SK-MEL-5 (cell line): ENCODE measurements at regions of chr4 and their contacts with region 1.

Region 1: GRCh38 chr4:74308215-74308614 is at the start of gene EPGN:
- DNase-seq: no peak
- total RNA-seq, gene EPGN: not detected in 2 replicates

Region 2: DNA sequence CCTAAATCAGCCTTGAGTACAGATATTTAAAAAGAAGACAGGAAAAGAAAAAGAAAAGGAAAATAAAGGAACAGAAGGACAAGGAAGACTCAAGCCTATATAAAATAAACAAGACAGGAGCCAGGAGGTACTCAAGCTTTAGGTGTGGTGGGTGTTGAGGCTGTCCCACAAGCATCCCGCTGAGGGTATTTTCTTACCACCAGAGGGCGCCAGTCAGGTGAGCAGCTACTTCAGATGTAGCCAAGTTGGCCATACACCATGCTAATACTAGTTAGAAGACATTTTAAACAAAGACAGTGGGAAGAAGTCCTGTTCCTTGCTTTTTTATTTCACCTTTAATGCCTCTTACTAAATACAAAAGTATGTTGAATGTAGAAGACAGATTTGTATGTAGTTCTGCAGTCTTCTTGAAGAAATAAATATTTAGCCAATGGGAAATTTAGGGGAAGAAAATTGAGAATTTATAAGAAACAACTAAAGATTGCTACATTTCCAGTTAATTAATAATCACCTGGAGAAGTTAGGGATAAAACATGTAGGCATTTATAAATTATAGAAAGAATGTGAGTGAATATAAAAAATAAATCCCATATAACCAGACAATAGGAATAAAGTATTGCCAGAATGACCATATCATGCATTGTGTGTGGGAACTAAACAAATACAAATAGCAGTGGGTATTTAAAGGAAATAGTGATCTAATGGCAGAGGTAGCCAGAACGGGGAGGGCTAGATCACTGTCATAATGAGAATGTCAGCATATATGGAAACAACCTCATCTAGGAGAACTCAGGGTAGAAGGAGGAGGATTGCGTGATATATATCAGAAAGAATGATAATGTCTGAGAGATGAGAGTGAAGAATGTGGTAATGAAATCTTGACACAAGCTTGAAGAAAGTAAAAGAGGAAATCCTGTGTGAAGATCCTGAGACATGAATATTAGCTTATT is 79.2 kb before region 1 on chr4:
- in situ Hi-C with region 1: loop called (anchors 5 kb)
- DNase-seq: peak; percentile 76

Region 3: DNA sequence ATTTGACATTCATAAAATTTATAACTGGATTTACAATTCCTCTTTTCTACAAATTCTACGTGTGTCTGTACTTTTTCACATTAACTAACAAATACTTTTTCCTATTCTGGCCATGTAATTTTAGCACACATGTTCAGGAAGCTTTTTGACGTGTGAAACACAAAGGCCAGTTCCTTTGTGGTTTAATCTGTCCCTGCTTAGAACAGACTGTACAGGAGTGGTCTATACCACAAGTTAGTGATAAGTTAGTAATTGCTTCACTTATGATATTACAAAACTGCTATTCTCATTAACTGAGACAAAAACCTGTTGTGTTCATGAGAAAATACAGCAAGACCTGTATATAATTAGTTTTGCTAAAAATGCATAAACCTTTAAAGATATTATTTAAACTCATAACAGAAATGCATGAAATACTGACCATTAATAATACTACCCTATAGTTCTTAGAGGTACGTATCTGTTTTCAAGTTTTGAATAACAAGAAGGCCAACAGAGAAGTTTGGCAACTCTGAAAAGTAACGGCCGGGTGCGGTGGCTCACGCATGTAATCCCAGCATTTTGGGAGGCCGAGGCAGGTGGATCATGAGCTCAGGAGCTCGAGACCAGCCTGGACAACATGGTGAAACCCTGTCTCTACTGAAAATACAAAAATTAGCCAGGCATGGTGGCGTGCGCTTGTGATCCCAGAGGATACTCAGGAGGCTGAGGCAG is 123.1 kb after region 1 on chr4:
- in situ Hi-C with region 1: no loop called
- DNase-seq: no peak